Calu3 (cell line): ENCODE measurements at regions of chr6 and their contacts with region 1.

Region 1: DNA sequence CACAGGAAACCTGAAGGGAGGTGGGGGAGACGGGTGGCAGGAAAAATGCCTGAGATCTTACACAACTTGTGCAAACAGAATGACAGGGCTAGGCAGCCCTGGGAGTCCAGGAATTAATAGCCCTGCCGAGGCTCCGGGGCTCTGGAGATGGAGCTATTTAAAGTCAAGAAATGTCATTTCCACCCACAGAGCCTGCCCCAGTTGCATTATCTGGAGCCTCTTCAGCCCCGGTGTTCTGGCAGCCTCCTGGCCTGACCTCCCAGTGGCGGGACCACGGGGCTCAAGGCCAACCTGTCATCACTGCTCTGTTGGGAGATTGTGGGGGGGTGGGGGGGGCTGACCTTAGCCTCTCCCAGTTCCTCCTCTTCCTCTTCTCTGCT is 28.5 kb upstream of the SCUBE3 start:
- DNase-seq: peak; percentile 67
- H3K4me3 Mint-ChIP-seq: no peak overlapping the region
- H3K27ac Mint-ChIP-seq: peak overlapping the region; percentile 15
- H3K4me1 Mint-ChIP-seq: peaks cover 53% of the 10 kb centered on the region
- H3K27me3 Mint-ChIP-seq: no peaks in the 10 kb centered on the region
- CTCF ChIP-seq: no peak

Region 2: DNA sequence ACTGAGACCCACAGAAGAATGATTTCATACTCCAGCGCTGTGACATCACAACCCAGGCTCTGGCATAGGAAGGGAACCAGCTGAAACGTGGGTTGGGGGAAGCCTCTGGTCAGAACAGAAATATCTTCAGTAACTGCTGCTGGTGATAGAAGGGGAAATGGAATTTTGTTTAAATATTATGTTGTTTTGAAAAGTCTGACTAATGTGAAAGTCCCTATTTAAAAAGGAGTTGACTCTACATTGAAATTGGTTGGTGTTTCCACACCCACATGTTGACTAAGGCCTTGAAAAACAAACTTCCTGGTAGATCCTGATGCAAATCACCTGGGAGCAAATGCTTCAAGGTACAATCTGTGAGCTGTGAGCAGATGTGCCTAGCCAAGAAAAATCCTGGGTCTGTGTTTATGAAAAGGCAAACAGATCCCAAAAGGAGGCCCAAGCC is 19.6 kb before region 1 on chr6:
- CTCF ChIA-PET with region 1: interaction called, 12 read pairs
- intact Hi-C with region 1: no loop called
- DNase-seq: peak; percentile 57
- H3K4me3 Mint-ChIP-seq: no peak overlapping the region
- H3K27ac Mint-ChIP-seq: peak overlapping the region; percentile 54
- H3K4me1 Mint-ChIP-seq: peaks cover 35% of the 10 kb centered on the region
- H3K27me3 Mint-ChIP-seq: peaks cover 8% of the 10 kb centered on the region
- CTCF ChIP-seq: no peak